ENCODE measurements at regions of chr9 and their contacts with region 1.

Region 1: DNA sequence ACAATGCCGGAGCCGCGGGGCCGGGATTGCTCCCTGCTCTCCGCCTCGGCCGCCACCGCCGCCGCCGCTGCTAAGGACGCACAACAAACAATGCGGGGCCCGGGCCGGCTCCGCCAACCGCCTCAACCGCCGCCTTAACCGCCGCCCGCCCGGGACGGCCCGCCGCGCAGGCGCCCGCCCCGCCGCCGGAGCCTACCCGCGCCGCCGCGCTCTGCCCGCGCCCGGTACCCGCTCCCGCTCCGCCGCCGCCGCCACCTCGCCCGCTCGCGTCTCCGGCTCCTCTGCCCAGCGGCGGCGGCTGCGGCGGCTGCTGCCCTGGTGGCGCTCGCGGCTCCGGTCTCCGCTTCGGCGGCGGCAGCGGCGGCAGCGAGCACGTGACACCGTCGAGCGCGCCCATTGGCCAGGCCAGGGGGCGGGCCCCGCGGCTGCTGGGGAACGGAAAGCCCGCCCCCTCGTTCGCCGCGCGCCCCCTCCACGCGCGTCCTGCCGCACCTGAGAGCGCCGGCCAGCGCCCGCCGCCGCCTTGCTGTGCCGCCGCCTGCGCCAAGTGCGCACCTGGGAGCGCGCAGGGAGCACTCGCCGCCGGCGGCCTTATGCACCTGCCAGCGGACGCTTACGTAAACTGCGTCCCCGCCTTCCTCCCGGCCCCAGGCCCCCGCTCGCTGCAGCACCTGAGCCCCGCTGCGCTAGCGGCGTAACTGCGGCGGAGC is at the start of gene STRBP:
- DNase-seq: peak; percentile 94
- H3K4me3 ChIP-seq: peak within 1 kb of the TSS; percentile 88 to 93 (median 92)
- H3K27ac ChIP-seq: peak within 1 kb of the TSS; percentile 65 to 78 (median 70)
- H3K4me1 ChIP-seq: peaks cover 10 to 24% (median 17%) of the 10 kb centered on the region in 4 donors
- H3K27me3 ChIP-seq: no peaks in the 10 kb centered on the region
- CTCF ChIP-seq: peak in 1 of 3 experiments; percentile 25
- EP300 ChIP-seq: no peak
- POLR2A ChIP-seq: no peak
- total RNA-seq, gene STRBP: 11.2 to 20.6 (median 14.5) TPM

Region 2: DNA sequence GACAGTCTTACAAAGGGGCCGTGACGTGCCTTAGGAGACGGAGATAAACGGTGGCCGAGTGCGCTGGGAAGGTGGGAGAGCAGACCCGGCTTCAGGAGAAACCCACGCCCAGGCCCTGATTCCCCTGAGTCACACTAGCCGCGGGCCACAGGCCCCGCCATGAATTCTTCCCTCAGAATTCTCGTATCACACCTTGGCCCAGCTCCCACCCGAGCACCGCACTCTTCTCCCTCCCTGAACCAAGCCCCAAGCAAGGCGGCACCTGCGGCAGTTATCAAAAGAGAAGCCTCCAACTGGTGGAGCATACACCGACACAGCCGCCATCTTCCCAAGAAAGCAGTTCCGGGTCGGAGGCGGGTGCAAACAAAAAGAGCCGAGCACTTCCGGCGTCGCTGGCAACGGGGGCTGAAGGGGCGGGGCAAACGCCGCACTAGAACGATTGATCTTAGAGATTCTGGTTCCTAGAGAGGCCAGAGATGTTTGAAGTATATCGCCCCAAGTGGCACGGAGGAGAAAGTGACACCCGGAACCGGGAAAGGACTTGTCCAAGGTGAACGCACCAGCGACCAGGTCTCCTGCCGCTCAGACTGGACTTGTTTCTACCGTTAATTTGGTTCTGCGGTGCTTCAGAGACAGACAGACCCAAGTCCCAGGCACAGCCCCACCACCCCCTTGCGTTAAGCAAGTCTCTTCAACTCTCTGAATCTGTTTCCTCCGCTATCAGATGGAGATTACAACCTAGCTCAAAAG is 1146.9 kb after region 1 on chr9 and contains the start of gene PSMB7:
- intact Hi-C with region 1: loop called (anchors 10 kb)
- DNase-seq: peak; percentile 99
- H3K4me3 ChIP-seq: peak within 1 kb of the TSS; percentile 78 to 89 (median 86)
- H3K27ac ChIP-seq: peak within 1 kb of the TSS; percentile 42 to 76 (median 69)
- H3K4me1 ChIP-seq: peaks cover 10 to 31% (median 23%) of the 10 kb centered on the region in 4 donors
- H3K27me3 ChIP-seq: no peaks in the 10 kb centered on the region
- CTCF ChIP-seq: peak; percentile 93
- EP300 ChIP-seq: no peak
- POLR2A ChIP-seq: peak; percentile 60
- total RNA-seq, gene PSMB7: 105 to 124 (median 113) TPM

Measured in esophagus muscularis mucosa (tissue), 4 donors.